ENCODE measurements at regions of chr20 and their contacts with region 1.

Region 1: GRCh38 chr20:57283860-57284259 is 17.4 kb upstream of the BMP7 start:
- DNase-seq: no peak
- H3K4me3 ChIP-seq: peak overlapping the region; percentile 18
- H3K27ac ChIP-seq: peak overlapping the region; percentile 87
- H3K4me1 ChIP-seq: peaks cover 92% of the 10 kb centered on the region
- CTCF ChIP-seq: no peak

Region 2: DNA sequence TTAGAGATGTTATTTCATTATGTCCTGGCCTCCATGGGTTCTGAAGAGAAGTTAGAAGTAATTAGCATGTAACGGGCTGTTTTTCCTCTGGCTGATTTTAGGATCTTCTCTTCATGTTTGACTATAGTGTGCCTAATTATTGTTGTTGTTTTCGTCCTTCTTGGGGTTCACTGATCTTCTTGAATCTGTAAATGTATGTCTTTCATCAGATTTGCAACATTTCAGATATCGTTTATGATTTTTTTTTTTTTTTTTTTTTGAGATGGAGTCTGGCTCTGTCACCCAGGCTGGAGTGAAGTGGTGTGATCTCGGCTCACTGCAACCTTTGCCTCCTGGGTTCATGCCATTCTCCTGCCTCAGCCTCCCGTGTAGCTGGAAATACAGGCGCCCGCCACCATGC is 408.1 kb before region 1 on chr20:
- CTCF ChIA-PET with region 1: no interaction called
- POLR2A ChIA-PET with region 1: no interaction called
- intact Hi-C with region 1: no loop called
- DNase-seq: no peak
- H3K4me3 ChIP-seq: no peak overlapping the region
- H3K27ac ChIP-seq: no peak overlapping the region
- H3K4me1 ChIP-seq: peaks cover 15% of the 10 kb centered on the region
- CTCF ChIP-seq: no peak

Region 3: GRCh38 chr20:57317789-57318371 is 34.0 kb after region 1 on chr20:
- CTCF ChIA-PET with region 1: no interaction called
- POLR2A ChIA-PET with region 1: interaction called, 6 read pairs
- intact Hi-C with region 1: loop called (anchors 2 kb)
- DNase-seq: peak; percentile 91
- H3K4me3 ChIP-seq: peak overlapping the region; percentile 37
- H3K27ac ChIP-seq: peak overlapping the region; percentile 95
- H3K4me1 ChIP-seq: peaks cover 100% of the 10 kb centered on the region
- CTCF ChIP-seq: no peak